Heart right ventricle (tissue), 16 donors: ENCODE measurements at regions of chr2 and their contacts with region 1.

Region 1: GRCh38 chr2:60484133-60484645 is 69.3 kb downstream of the BCL11A start:
- DNase-seq: peak in 1 of 2 donors; percentile 31
- ATAC-seq: peak; percentile 21 to 71 (median 46)
- H3K4me3 ChIP-seq: no peak overlapping the region
- H3K27ac ChIP-seq: peak overlapping the region; percentile 28 to 88 (median 76)
- H3K4me1 ChIP-seq: peaks cover 12 to 73% (median 42%) of the 10 kb centered on the region in 9 donors
- H3K27me3 ChIP-seq: no peaks in the 10 kb centered on the region
- CTCF ChIP-seq: no peak

Region 2: GRCh38 chr2:60355849-60356261 is 128.3 kb before region 1 on chr2:
- intact Hi-C with region 1: no loop called
- DNase-seq: no peak
- ATAC-seq: no peak
- H3K4me3 ChIP-seq: no peak overlapping the region
- H3K27ac ChIP-seq: no peak overlapping the region
- H3K4me1 ChIP-seq: peaks cover 0 to 6% (median 0%) of the 10 kb centered on the region in 9 donors
- H3K27me3 ChIP-seq: no peaks in the 10 kb centered on the region
- CTCF ChIP-seq: no peak

Region 3: GRCh38 chr2:60530660-60531281 is 46.6 kb after region 1 on chr2:
- intact Hi-C with region 1: loop called in 1 of 10 experiments (anchors 5 kb)
- DNase-seq: peak; percentile 46 to 68
- ATAC-seq: peak in 7 of 8 donors; percentile 52 to 81 (median 73)
- H3K4me3 ChIP-seq: no peak overlapping the region
- H3K27ac ChIP-seq: peak overlapping the region in 4 of 10 donors; percentile 3 to 48 (median 36)
- H3K4me1 ChIP-seq: peaks cover 0 to 77% (median 44%) of the 10 kb centered on the region in 9 donors
- H3K27me3 ChIP-seq: peaks cover 0 to 46% (median 30%) of the 10 kb centered on the region in 7 donors
- CTCF ChIP-seq: no peak